ENCODE measurements at regions of chr6 and their contacts with region 1.

Region 1: GRCh38 chr6:11330413-11330760 is 97.9 kb upstream of the NEDD9 start:
- DNase-seq: no peak
- ATAC-seq: no peak
- H3K4me3 ChIP-seq: no peak overlapping the region
- H3K4me3 Mint-ChIP-seq: peak overlapping the region; percentile 38
- H3K27ac ChIP-seq: peak overlapping the region; percentile 33 to 78
- H3K27ac Mint-ChIP-seq: peak overlapping the region; percentile 76
- H3K4me1 ChIP-seq: peaks cover 53 to 54% of the 10 kb centered on the region in 2 donors
- H3K4me1 Mint-ChIP-seq: peaks cover 71% of the 10 kb centered on the region
- H3K27me3 ChIP-seq: no peaks in the 10 kb centered on the region
- H3K27me3 Mint-ChIP-seq: no peaks in the 10 kb centered on the region
- CTCF ChIP-seq: no peak

Region 2: DNA sequence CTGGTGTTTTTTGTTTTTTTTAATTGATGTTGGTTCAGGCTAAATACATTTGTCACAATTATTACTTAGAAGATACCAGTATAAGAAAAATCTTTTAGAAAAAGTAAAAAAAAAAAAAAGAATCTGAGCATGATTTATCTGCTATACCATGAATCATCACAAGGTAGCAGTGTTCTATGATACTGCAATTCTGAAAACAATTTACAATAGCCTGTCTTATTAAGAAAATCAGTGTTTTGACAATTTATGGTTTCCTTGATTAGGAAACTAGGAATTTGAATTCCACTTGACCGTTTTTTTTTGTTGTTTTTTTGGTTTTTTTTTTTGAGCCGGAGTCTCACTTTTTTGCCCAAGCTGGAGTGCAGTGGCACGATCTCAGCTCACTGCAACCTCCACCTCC is 482.7 kb before region 1 on chr6:
- CTCF ChIA-PET with region 1: no interaction called
- POLR2A ChIA-PET with region 1: no interaction called
- intact Hi-C with region 1: no loop called
- DNase-seq: no peak
- ATAC-seq: no peak
- H3K4me3 ChIP-seq: no peak overlapping the region
- H3K4me3 Mint-ChIP-seq: no peak overlapping the region
- H3K27ac ChIP-seq: no peak overlapping the region
- H3K27ac Mint-ChIP-seq: no peak overlapping the region
- H3K4me1 ChIP-seq: no peaks in the 10 kb centered on the region
- H3K4me1 Mint-ChIP-seq: no peaks in the 10 kb centered on the region
- H3K27me3 ChIP-seq: no peaks in the 10 kb centered on the region
- H3K27me3 Mint-ChIP-seq: peaks cover 8% of the 10 kb centered on the region
- CTCF ChIP-seq: peak; percentile 68

Region 3: GRCh38 chr6:11194356-11195218 is 135.8 kb before region 1 on chr6:
- CTCF ChIA-PET with region 1: no interaction called
- POLR2A ChIA-PET with region 1: no interaction called
- intact Hi-C with region 1: no loop called
- DNase-seq: no peak
- ATAC-seq: no peak
- H3K4me3 ChIP-seq: no peak overlapping the region
- H3K4me3 Mint-ChIP-seq: no peak overlapping the region
- H3K27ac ChIP-seq: no peak overlapping the region
- H3K27ac Mint-ChIP-seq: no peak overlapping the region
- H3K4me1 ChIP-seq: peaks cover 0 to 8% of the 10 kb centered on the region in 2 donors
- H3K4me1 Mint-ChIP-seq: peaks cover 11% of the 10 kb centered on the region
- H3K27me3 ChIP-seq: no peaks in the 10 kb centered on the region
- H3K27me3 Mint-ChIP-seq: no peaks in the 10 kb centered on the region
- CTCF ChIP-seq: no peak

Region 4: DNA sequence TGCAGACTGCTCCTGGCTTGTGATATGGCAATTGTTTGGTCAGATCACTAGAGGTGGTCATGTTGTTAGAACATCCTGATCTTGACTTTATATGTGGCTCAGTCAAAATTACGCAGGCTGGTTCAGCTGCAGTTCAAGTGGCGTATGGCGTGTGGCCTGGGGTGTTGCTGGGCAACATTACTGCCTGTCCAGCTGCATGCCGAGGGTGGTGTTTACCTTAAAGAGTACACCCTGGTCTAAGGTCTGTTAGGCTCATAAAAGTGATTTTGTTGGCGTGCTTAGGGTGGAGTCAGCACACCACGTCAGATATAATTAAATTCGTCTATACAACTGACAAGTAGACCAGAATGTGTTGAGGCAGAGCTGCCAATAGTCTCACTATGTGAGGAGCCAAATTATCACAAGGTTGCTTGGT is 42.3 kb before region 1 on chr6:
- CTCF ChIA-PET with region 1: no interaction called
- POLR2A ChIA-PET with region 1: no interaction called
- intact Hi-C with region 1: no loop called
- DNase-seq: no peak
- ATAC-seq: no peak
- H3K4me3 ChIP-seq: no peak overlapping the region
- H3K4me3 Mint-ChIP-seq: no peak overlapping the region
- H3K27ac ChIP-seq: no peak overlapping the region
- H3K27ac Mint-ChIP-seq: no peak overlapping the region
- H3K4me1 ChIP-seq: no peaks in the 10 kb centered on the region
- H3K4me1 Mint-ChIP-seq: no peaks in the 10 kb centered on the region
- H3K27me3 ChIP-seq: no peaks in the 10 kb centered on the region
- H3K27me3 Mint-ChIP-seq: no peaks in the 10 kb centered on the region
- CTCF ChIP-seq: no peak

Region 5: DNA sequence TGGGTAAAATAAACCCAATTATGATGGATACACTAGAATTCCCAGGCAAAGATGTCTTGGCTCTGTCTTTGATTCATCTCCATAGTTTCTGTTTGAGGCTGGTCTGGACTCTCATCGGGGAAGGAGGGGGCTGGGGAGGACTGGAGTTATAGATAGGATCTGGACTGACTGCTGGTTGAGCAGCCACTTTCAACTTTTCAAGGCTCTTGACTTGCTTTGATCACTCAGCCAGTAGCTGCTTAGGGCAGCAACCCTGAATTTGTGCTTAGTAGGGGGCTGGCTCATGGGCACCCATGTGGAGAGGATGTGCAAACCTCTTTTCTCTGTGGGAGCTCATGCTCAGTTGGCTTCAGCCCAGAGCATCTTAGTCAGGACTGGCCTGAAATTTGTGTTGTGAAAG is 16.1 kb after region 1 on chr6:
- CTCF ChIA-PET with region 1: interaction called, 3 read pairs
- POLR2A ChIA-PET with region 1: no interaction called
- intact Hi-C with region 1: loop called (anchors 2 kb)
- DNase-seq: no peak
- ATAC-seq: peak; percentile 68
- H3K4me3 ChIP-seq: no peak overlapping the region
- H3K4me3 Mint-ChIP-seq: peak overlapping the region; percentile 30
- H3K27ac ChIP-seq: peak overlapping the region in 1 of 2 donors; percentile 20
- H3K27ac Mint-ChIP-seq: peak overlapping the region; percentile 56
- H3K4me1 ChIP-seq: peaks cover 42 to 54% of the 10 kb centered on the region in 2 donors
- H3K4me1 Mint-ChIP-seq: peaks cover 90% of the 10 kb centered on the region
- H3K27me3 ChIP-seq: no peaks in the 10 kb centered on the region
- H3K27me3 Mint-ChIP-seq: no peaks in the 10 kb centered on the region
- CTCF ChIP-seq: no peak

Region 6: GRCh38 chr6:11374036-11375010 is 43.9 kb after region 1 on chr6:
- CTCF ChIA-PET with region 1: no interaction called
- POLR2A ChIA-PET with region 1: no interaction called
- intact Hi-C with region 1: loop called (anchors 5 kb)
- DNase-seq: peak; percentile 90
- ATAC-seq: peak; percentile 90
- H3K4me3 ChIP-seq: no peak overlapping the region
- H3K4me3 Mint-ChIP-seq: peak overlapping the region; percentile 35
- H3K27ac ChIP-seq: peak overlapping the region; percentile 61 to 73
- H3K27ac Mint-ChIP-seq: peak overlapping the region; percentile 69
- H3K4me1 ChIP-seq: peaks cover 67 to 73% of the 10 kb centered on the region in 2 donors
- H3K4me1 Mint-ChIP-seq: peaks cover 84% of the 10 kb centered on the region
- H3K27me3 ChIP-seq: no peaks in the 10 kb centered on the region
- H3K27me3 Mint-ChIP-seq: no peaks in the 10 kb centered on the region
- CTCF ChIP-seq: no peak

Region 7: GRCh38 chr6:12113190-12113577 is 782.8 kb after region 1 on chr6:
- CTCF ChIA-PET with region 1: no interaction called
- POLR2A ChIA-PET with region 1: no interaction called
- intact Hi-C with region 1: no loop called
- DNase-seq: no peak
- ATAC-seq: peak; percentile 35
- H3K4me3 ChIP-seq: no peak overlapping the region
- H3K4me3 Mint-ChIP-seq: peak overlapping the region; percentile 57
- H3K27ac ChIP-seq: peak overlapping the region; percentile 5 to 22
- H3K27ac Mint-ChIP-seq: peak overlapping the region; percentile 65
- H3K4me1 ChIP-seq: peaks cover 20 to 49% of the 10 kb centered on the region in 2 donors
- H3K4me1 Mint-ChIP-seq: peaks cover 46% of the 10 kb centered on the region
- H3K27me3 ChIP-seq: no peaks in the 10 kb centered on the region
- H3K27me3 Mint-ChIP-seq: no peaks in the 10 kb centered on the region
- CTCF ChIP-seq: no peak

Measured in B cell (primary cell).